BJ (cell line): ENCODE measurements at regions of chr3 and their contacts with region 1.

Region 1: DNA sequence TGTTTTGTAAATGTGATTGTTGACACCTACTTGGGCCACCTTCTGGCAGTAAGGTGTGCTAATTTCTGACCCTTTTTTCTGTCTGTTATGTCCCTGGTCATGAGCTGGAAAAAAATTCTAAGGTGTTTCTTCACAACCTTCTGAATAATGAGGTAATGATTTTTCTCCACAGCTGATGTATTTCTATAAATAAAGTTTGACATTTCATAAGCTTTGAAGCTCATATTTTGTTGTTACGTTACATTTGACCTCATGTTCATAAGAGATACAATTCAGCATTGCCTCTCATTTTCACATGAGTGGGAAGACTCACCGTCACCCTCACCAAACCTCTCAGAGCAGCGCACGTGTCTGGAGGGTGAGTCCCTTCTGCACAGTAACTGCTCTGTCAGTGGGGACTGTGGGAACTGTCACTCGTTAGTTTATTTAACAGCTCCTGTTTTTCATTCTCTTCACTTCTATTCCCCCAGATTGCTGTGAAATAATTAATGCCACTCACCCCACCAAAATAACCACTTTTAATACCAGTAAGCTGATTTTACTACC is 140.9 kb downstream of the PLCL2 start:
- DNase-seq: no peak
- H3K4me3 ChIP-seq: no peak overlapping the region
- H3K27me3 ChIP-seq: no peaks in the 10 kb centered on the region
- CTCF ChIP-seq: no peak

Region 2: DNA sequence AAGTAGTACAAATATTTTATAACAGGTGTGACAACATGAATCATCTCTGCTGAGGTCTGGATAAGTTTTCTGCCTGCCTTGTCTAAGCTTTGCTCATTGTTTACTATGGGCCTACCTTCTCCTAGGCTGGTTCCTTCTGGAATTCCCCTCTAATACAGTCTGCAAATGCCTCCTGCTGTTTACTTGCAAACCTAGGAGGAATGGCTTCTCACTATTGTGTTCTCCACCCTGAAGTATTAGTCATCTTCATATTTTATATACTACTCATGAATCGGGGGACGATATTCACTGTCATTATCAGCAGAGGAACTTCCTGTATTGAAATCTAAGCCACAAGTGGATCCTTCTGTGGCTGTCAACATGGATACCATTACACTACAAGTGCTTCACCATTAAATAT is 13.9 kb after region 1 on chr3:
- CTCF ChIA-PET with region 1: interaction called, 11 read pairs
- POLR2A ChIA-PET with region 1: no interaction called
- DNase-seq: peak; percentile 79
- H3K4me3 ChIP-seq: no peak overlapping the region
- H3K27me3 ChIP-seq: no peaks in the 10 kb centered on the region
- CTCF ChIP-seq: peak; percentile 19; the same call in 1 of the 2 replicates